ENCODE measurements at regions of chr3 and their contacts with region 1.

Region 1: DNA sequence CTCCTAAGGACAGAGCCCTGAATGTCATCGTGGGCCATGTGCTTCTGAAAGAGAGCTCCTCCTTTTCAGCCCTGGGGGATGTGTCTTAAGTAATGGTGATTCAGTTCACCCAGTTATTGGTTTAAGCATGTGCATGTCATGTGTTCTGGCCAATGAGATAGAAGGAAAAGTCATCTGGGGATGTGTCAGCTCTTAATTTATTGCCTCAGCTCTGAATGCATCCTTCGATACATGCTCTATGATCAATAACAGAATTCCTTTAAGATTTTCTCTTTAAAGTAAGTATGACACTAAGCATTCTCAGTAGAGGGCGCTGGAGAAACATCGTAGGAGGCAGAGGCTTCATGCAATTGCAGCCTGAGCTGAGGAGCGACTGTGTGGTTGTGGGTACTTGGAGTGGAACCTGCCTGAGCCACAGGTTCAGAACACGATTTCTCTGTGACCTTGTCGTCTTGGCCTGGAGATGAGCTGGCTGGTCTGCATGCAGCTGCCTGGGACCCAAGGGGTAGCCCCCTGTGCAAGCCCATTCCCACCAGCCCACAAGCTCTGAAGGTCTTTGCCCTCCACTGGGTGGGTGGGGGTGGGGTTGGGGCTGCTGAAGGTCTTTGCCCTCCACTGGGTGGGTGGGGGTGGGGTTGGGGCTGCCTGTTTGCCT is 69.5 kb downstream of the C3orf38 start:
- DNase-seq: peak; percentile 92
- H3K4me3 ChIP-seq: no peak overlapping the region
- H3K27ac ChIP-seq: no peak overlapping the region
- H3K4me1 ChIP-seq: peaks cover 46% of the 10 kb centered on the region
- H3K27me3 ChIP-seq: no peaks in the 10 kb centered on the region
- CTCF ChIP-seq: peak; percentile 84

Region 2: GRCh38 chr3:87541723-87542122 is 677.5 kb before region 1 on chr3:
- CTCF ChIA-PET with region 1: no interaction called
- POLR2A ChIA-PET with region 1: no interaction called
- intact Hi-C with region 1: loop called (anchors 5 kb)
- DNase-seq: no peak
- H3K4me3 ChIP-seq: no peak overlapping the region
- H3K27ac ChIP-seq: no peak overlapping the region
- H3K4me1 ChIP-seq: peaks cover 9% of the 10 kb centered on the region
- H3K27me3 ChIP-seq: no peaks in the 10 kb centered on the region
- CTCF ChIP-seq: no peak

Region 3: GRCh38 chr3:87691109-87691508 is 528.2 kb before region 1 on chr3:
- CTCF ChIA-PET with region 1: no interaction called
- POLR2A ChIA-PET with region 1: no interaction called
- intact Hi-C with region 1: no loop called
- DNase-seq: no peak
- H3K4me3 ChIP-seq: no peak overlapping the region
- H3K27ac ChIP-seq: no peak overlapping the region
- H3K4me1 ChIP-seq: peaks cover 8% of the 10 kb centered on the region
- H3K27me3 ChIP-seq: no peaks in the 10 kb centered on the region
- CTCF ChIP-seq: no peak

Region 4: DNA sequence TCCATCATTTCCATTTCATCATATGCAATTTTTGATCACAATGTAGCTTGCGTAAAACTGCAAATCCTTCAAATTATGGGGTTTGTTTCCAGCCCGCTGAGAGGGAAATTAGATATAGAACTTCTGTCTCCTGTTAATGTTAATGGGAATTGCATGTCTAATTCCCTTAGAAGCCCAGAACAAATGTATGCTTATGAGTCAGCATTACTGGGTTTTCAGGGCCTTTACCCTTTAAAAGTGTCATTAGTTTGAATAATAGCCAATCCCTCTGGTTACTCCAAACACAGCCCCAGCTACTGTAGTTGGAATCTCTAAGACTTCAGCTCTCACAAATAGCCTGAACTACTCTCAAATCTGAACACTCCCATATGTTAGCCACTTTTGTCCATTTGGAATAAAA is 369.9 kb after region 1 on chr3:
- CTCF ChIA-PET with region 1: no interaction called
- POLR2A ChIA-PET with region 1: no interaction called
- intact Hi-C with region 1: loop called (anchors 2 kb)
- DNase-seq: peak; percentile 92
- H3K4me3 ChIP-seq: no peak overlapping the region
- H3K27ac ChIP-seq: peak overlapping the region; percentile 85
- H3K4me1 ChIP-seq: peaks cover 38% of the 10 kb centered on the region
- H3K27me3 ChIP-seq: no peaks in the 10 kb centered on the region
- CTCF ChIP-seq: no peak

Region 5: GRCh38 chr3:88807491-88808100 is 588.3 kb after region 1 on chr3:
- CTCF ChIA-PET with region 1: no interaction called
- POLR2A ChIA-PET with region 1: no interaction called
- intact Hi-C with region 1: loop called (anchors 5 kb)
- DNase-seq: peak; percentile 86
- H3K4me3 ChIP-seq: no peak overlapping the region
- H3K27ac ChIP-seq: peak overlapping the region; percentile 40
- H3K4me1 ChIP-seq: peaks cover 18% of the 10 kb centered on the region
- H3K27me3 ChIP-seq: no peaks in the 10 kb centered on the region
- CTCF ChIP-seq: no peak

Region 6: GRCh38 chr3:89303701-89304100 is 1084.4 kb after region 1 on chr3:
- CTCF ChIA-PET with region 1: no interaction called
- POLR2A ChIA-PET with region 1: no interaction called
- intact Hi-C with region 1: loop called (anchors 10 kb)
- DNase-seq: no peak
- H3K4me3 ChIP-seq: no peak overlapping the region
- H3K27ac ChIP-seq: no peak overlapping the region
- H3K4me1 ChIP-seq: peaks cover 41% of the 10 kb centered on the region
- H3K27me3 ChIP-seq: no peaks in the 10 kb centered on the region
- CTCF ChIP-seq: no peak

Region 7: DNA sequence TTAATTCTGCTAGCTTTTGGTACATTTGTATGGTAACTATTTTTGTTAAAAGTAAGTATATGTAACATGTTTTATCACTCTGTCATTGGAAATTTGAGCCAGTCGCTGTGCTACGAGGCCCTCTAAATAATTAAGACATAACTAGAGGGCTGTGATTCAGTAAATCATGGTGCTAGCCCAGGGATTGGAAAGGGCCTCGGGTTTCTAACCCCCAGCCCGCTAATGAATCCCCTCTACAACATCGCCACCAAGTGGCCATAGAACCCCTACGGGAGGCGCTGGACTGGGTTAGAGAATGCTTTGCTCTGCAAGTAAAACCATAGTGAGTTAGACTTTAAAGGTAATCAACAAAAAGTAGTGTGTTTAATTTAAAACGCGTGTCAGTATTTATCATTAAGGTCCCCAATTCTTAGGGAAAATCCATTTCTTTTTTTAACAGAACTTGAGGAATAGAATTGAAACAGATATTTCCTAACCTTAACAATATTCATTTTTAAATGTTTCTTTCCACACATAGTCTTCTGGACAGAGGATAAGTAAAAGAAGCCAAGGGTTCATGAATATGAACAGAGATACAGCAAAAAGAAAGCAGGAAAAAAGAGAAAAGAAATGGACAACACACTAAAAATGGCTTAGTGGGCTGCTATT is 1632.8 kb after region 1 on chr3:
- CTCF ChIA-PET with region 1: interaction called, 3 read pairs
- POLR2A ChIA-PET with region 1: no interaction called
- intact Hi-C with region 1: loop called (anchors 5 kb)
- DNase-seq: peak; percentile 92
- H3K4me3 ChIP-seq: no peak overlapping the region
- H3K27ac ChIP-seq: no peak overlapping the region
- H3K4me1 ChIP-seq: peaks cover 10% of the 10 kb centered on the region
- H3K27me3 ChIP-seq: no peaks in the 10 kb centered on the region
- CTCF ChIP-seq: peak; percentile 95

Measured in A673 (cell line).